AG04450 (cell line): ENCODE measurements at regions of chr6 and their contacts with region 1.

Region 1: GRCh38 chr6:68638230-68638900 is 3.3 kb downstream of the ADGRB3 start:
- DNase-seq: peak; percentile 6
- H3K4me3 ChIP-seq: no peak overlapping the region
- H3K27ac ChIP-seq: no peak overlapping the region
- H3K27me3 ChIP-seq: peaks cover 22% of the 10 kb centered on the region
- CTCF ChIP-seq: peak; percentile 74

Region 2: GRCh38 chr6:67818322-67818721 is 820.0 kb before region 1 on chr6:
- CTCF ChIA-PET with region 1: no interaction called
- POLR2A ChIA-PET with region 1: no interaction called
- DNase-seq: no peak
- H3K4me3 ChIP-seq: no peak overlapping the region
- H3K27ac ChIP-seq: no peak overlapping the region
- H3K27me3 ChIP-seq: no peaks in the 10 kb centered on the region
- CTCF ChIP-seq: no peak

Region 3: GRCh38 chr6:68108233-68108835 is 530.0 kb before region 1 on chr6:
- CTCF ChIA-PET with region 1: no interaction called
- POLR2A ChIA-PET with region 1: no interaction called
- DNase-seq: peak; percentile 1
- H3K4me3 ChIP-seq: no peak overlapping the region
- H3K27ac ChIP-seq: no peak overlapping the region
- H3K27me3 ChIP-seq: no peaks in the 10 kb centered on the region
- CTCF ChIP-seq: no peak

Region 4: GRCh38 chr6:68615938-68616337 is 22.4 kb before region 1 on chr6:
- CTCF ChIA-PET with region 1: no interaction called
- POLR2A ChIA-PET with region 1: no interaction called
- DNase-seq: no peak
- H3K4me3 ChIP-seq: no peak overlapping the region
- H3K27ac ChIP-seq: no peak overlapping the region
- H3K27me3 ChIP-seq: no peaks in the 10 kb centered on the region
- CTCF ChIP-seq: no peak

Region 5: DNA sequence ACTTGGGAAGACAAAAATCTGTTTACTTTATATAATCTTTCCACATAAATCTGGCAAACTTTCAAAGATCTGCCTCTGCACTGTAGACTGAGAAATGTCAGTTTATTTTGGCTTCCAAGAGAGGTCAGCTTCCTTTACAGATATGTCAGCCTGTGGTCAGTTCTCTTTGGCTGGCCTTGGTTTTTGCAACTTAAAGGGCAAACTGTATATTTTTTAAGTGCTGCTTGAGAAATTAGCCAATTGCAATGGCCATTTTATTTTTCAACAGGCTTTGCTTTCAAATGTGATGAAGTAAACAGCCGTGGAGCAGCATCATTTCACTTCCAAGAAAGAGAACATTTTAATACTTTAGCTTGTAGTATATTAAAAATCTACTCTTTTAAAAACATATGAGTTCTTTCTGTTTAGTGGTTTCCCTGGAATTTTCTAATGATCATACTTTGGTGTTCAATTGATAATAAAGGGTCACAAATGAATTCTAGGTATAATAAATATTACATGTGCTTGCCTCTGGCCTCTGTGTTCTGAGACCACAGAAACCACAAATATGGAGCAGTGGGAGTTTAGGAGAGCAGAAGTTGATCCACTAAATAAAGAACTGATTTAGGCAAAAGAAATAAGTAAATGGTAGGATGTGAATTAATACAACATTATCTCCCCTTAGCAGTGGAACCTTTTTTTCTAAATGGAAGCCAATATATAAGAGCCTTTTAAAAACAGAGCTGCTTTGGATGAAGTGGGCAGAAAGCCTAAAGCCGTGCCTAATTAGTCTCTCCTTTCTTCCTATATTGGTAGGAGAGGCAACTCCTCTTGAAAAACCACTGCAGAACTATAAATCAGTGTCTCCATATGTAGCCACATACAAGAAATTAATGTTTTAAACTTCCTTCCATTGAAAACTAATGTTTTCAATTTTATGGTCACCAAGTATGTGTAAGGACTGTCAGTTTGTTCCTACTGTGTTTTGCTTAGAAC is 12.9 kb after region 1 on chr6:
- CTCF ChIA-PET with region 1: interaction called, 14 read pairs
- POLR2A ChIA-PET with region 1: no interaction called
- DNase-seq: no peak
- H3K4me3 ChIP-seq: no peak overlapping the region
- H3K27ac ChIP-seq: no peak overlapping the region
- H3K27me3 ChIP-seq: no peaks in the 10 kb centered on the region
- CTCF ChIP-seq: no peak